MCF 10A (cell line): ENCODE measurements at regions of chr7 and their contacts with region 1.

Region 1: DNA sequence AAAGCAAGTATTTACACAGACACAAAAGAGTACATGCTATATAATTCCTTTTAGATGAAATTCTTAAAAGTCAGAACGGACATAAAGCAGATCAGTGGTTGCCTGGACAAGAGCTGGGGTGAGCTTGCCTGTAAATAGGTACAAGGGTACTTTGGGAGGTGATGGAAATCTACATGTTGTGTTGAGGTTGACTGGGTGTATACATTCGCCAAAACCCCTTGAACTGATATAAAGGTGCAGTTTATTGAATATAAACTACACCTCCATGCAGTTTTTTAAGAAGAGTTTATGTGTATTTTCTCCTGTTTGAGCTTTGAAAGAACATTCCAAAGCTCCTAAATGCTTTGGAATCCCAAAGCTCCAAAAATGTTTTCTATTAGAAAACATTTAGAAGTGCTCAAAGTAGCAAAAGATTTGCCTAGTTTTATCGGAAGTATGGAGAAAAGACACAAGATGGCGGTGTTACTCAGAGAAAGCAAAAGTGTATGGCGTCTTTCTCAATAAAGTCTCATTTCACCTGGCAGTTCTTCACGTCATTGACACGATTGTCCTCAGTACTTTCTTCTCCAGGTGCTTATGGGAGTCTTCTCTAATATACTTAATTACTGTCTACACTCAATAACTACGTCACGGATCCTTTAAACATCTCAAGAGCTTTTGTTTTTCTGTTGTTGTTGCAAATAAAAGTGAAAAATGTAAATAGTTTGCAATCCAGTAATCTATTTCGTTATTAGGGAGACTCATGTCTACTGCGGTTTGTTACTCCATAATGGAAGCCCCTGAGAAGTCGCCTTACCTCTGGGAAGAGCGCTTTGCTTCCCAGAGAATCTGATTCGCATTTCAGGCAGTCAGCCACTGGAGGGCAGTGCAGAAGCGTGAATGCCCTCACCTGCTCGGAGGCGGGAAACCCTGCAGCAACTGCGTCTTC is 14.7 kb upstream of the SEC61G start:
- DNase-seq: peak; percentile 90
- H3K4me3 Mint-ChIP-seq: peak overlapping the region; percentile 75
- H3K27ac Mint-ChIP-seq: peak overlapping the region; percentile 75
- H3K4me1 Mint-ChIP-seq: peaks cover 13% of the 10 kb centered on the region
- H3K27me3 Mint-ChIP-seq: no peaks in the 10 kb centered on the region
- CTCF ChIP-seq: peak; percentile 80

Region 2: DNA sequence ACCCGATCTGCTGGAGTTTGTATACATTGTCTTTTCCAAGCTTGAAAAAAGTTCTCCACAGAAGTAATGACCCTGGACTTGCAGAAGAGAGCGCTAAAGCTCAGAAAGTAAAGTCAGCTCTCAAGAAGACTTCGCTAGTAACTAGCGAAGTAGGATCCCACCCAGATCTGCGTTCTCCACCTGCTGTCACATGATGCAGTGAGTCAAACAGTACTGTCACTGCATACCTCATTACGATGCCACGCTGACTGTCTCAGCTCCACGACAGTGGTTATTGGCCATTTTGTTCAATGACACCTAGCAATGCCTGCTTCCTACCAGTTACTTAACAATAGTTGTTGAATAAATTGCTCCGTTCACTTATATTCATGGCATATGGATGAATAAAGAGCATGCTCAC is 14.9 kb after region 1 on chr7:
- CTCF ChIA-PET with region 1: interaction called, 41 read pairs
- POLR2A ChIA-PET with region 1: no interaction called
- intact Hi-C with region 1: no loop called
- DNase-seq: peak; percentile 65
- H3K4me3 Mint-ChIP-seq: no peak overlapping the region
- H3K27ac Mint-ChIP-seq: peak overlapping the region; percentile 49
- H3K4me1 Mint-ChIP-seq: peaks cover 6% of the 10 kb centered on the region
- H3K27me3 Mint-ChIP-seq: no peaks in the 10 kb centered on the region
- CTCF ChIP-seq: peak; percentile 54

Region 3: GRCh38 chr7:54839538-54840213 is 65.9 kb after region 1 on chr7:
- CTCF ChIA-PET with region 1: interaction called, 90 read pairs
- POLR2A ChIA-PET with region 1: interaction called, 3 read pairs
- intact Hi-C with region 1: loop called (anchors 1 kb)
- DNase-seq: peak; percentile 81
- H3K4me3 Mint-ChIP-seq: no peak overlapping the region
- H3K27ac Mint-ChIP-seq: no peak overlapping the region
- H3K4me1 Mint-ChIP-seq: peaks cover 29% of the 10 kb centered on the region
- H3K27me3 Mint-ChIP-seq: no peaks in the 10 kb centered on the region
- CTCF ChIP-seq: peak; percentile 80

Region 4: GRCh38 chr7:55086413-55087201 is 312.9 kb after region 1 on chr7:
- CTCF ChIA-PET with region 1: interaction called, 13 read pairs
- POLR2A ChIA-PET with region 1: no interaction called
- intact Hi-C with region 1: no loop called
- DNase-seq: peak; percentile 78
- H3K4me3 Mint-ChIP-seq: peak overlapping the region; percentile 68
- H3K27ac Mint-ChIP-seq: peak overlapping the region; percentile 54
- H3K4me1 Mint-ChIP-seq: peaks cover 58% of the 10 kb centered on the region
- H3K27me3 Mint-ChIP-seq: no peaks in the 10 kb centered on the region
- CTCF ChIP-seq: no peak

Region 5: DNA sequence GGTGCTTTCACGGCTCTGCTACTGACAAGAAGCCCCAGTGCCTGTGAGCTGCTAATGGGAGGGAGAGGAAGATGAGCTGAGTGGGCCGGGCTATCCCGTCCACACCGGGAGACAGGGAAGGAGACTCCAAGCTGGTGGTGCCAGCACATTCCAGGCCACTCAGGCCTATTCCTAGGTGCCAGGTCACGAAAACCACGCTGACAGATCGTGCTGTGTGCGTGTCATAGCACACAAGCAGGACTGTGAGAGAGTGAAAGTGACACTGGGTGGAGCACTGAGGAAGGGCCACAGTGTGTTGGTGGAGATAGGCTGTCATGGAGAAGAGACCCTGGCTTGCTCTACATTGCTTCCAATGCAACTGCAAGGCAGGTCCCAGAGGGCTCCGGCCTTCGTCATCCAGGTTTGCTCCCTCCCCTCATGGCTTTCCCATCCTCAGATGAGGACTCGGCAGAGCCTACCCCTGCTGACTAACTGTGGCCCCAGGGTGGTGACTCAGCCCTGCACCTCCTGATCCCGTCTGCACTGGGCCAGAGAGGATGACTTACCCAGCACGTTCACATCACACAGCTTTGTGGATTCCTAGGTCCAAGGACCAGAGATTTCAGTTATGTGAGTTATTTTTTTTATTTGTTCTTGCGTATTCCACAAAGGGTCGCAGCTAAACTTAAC is 412.3 kb after region 1 on chr7:
- CTCF ChIA-PET with region 1: interaction called, 22 read pairs
- POLR2A ChIA-PET with region 1: no interaction called
- intact Hi-C with region 1: loop called (anchors 5 kb)
- DNase-seq: peak; percentile 97
- H3K4me3 Mint-ChIP-seq: no peak overlapping the region
- H3K27ac Mint-ChIP-seq: peak overlapping the region; percentile 79
- H3K4me1 Mint-ChIP-seq: peaks cover 29% of the 10 kb centered on the region
- H3K27me3 Mint-ChIP-seq: no peaks in the 10 kb centered on the region
- CTCF ChIP-seq: no peak

Region 6: GRCh38 chr7:55255496-55256435 is 482.0 kb after region 1 on chr7:
- CTCF ChIA-PET with region 1: interaction called, 309 read pairs
- POLR2A ChIA-PET with region 1: interaction called, 19 read pairs
- intact Hi-C with region 1: loop called (anchors 1 kb)
- DNase-seq: peak; percentile 81
- H3K4me3 Mint-ChIP-seq: peak overlapping the region; percentile 78
- H3K27ac Mint-ChIP-seq: peak overlapping the region; percentile 72
- H3K4me1 Mint-ChIP-seq: no peaks in the 10 kb centered on the region
- H3K27me3 Mint-ChIP-seq: peaks cover 12% of the 10 kb centered on the region
- CTCF ChIP-seq: peak; percentile 68

Region 7: GRCh38 chr7:55415173-55415778 is 641.5 kb after region 1 on chr7:
- CTCF ChIA-PET with region 1: interaction called, 5 read pairs
- POLR2A ChIA-PET with region 1: no interaction called
- intact Hi-C with region 1: loop called (anchors 1 kb)
- DNase-seq: peak; percentile 81
- H3K4me3 Mint-ChIP-seq: no peak overlapping the region
- H3K27ac Mint-ChIP-seq: no peak overlapping the region
- H3K4me1 Mint-ChIP-seq: no peaks in the 10 kb centered on the region
- H3K27me3 Mint-ChIP-seq: no peaks in the 10 kb centered on the region
- CTCF ChIP-seq: peak; percentile 77